Naive thymus-derived CD4-positive, alpha-beta T cell (primary cell): ENCODE measurements at regions of chr2 and their contacts with region 1.

Region 1: GRCh38 chr2:216412022-216412999 is at the start of gene SMARCAL1:
- DNase-seq: peak; percentile 93 to 98 (median 97)
- ATAC-seq: peak; percentile 97
- H3K4me3 ChIP-seq: peak within 1 kb of the TSS; percentile 89
- H3K4me3 Mint-ChIP-seq: peak within 1 kb of the TSS; percentile 85 to 99 (median 98)
- H3K27ac ChIP-seq: peak within 1 kb of the TSS; percentile 83
- H3K27ac Mint-ChIP-seq: peak within 1 kb of the TSS; percentile 86 to 97 (median 94)
- H3K4me1 ChIP-seq: peaks cover 0 to 7% of the 10 kb centered on the region in 2 donors
- H3K4me1 Mint-ChIP-seq: peaks cover 6 to 28% (median 23%) of the 10 kb centered on the region in 7 donors
- H3K27me3 ChIP-seq: no peaks in the 10 kb centered on the region
- H3K27me3 Mint-ChIP-seq: peaks cover 0 to 14% (median 3%) of the 10 kb centered on the region in 5 donors
- total RNA-seq, gene SMARCAL1: 16.2 to 30.3 (median 24.6) TPM

Region 2: DNA sequence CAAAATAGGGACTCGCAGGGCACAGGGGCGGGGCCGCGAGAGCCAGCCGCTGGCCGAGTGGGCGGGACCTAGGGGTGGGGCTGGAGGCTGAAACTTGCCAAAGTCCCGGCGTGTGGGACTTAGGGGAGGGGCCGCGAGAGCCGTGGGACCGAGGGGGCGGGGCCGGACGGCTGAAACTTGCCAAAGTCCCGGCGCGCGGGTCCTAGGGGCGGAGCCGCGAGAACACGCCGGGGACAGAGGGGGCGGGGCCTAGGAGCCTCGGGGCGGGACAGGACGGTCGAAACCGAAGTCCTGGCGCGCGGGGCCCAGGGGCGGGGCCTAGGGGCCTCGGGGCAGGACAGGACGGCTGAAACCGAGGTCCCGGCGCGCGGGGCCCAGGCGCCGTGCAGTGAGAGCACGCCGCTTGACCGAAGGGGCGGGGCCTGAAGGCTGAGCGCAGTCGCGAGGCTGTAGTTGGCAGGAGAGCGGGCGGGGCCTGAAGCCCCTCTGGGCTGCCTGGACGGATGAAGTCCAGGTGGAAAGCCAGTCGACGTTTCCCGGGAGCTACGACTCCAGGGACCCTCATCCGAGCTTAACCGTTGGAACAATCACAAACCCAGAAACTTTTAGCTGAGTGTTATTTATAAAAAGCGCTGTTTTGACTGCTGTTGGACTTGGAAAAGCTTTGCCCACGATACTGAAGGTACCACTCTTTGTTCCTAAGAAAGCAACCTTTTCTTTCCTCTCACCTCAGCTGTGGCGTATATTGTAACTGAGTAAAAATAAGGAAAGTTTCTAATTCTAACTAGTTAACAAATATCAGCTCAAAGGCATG is 1602.4 kb before region 1 on chr2:
- CTCF ChIA-PET with region 1: no interaction called
- POLR2A ChIA-PET with region 1: no interaction called
- intact Hi-C with region 1: loop called in 1 of 2 experiments (anchors 1 kb)
- DNase-seq: peak; percentile 75 to 100 (median 84)
- ATAC-seq: peak; percentile 89
- H3K4me3 ChIP-seq: peak overlapping the region; percentile 75
- H3K4me3 Mint-ChIP-seq: peak overlapping the region; percentile 88 to 98 (median 96)
- H3K27ac ChIP-seq: peak overlapping the region; percentile 72
- H3K27ac Mint-ChIP-seq: peak overlapping the region in 8 of 9 donors; percentile 56 to 95 (median 85)
- H3K4me1 ChIP-seq: peaks cover 0 to 7% of the 10 kb centered on the region in 2 donors
- H3K4me1 Mint-ChIP-seq: peaks cover 10 to 43% (median 35%) of the 10 kb centered on the region in 7 donors
- H3K27me3 ChIP-seq: no peaks in the 10 kb centered on the region
- H3K27me3 Mint-ChIP-seq: peaks cover 0 to 28% (median 9%) of the 10 kb centered on the region in 5 donors

Region 3: GRCh38 chr2:215931256-215931903 is 480.9 kb before region 1 on chr2:
- CTCF ChIA-PET with region 1: no interaction called
- POLR2A ChIA-PET with region 1: no interaction called
- intact Hi-C with region 1: no loop called
- DNase-seq: peak; percentile 9 to 53 (median 38)
- ATAC-seq: peak; percentile 66
- H3K4me3 ChIP-seq: no peak overlapping the region
- H3K4me3 Mint-ChIP-seq: no peak overlapping the region
- H3K27ac ChIP-seq: no peak overlapping the region
- H3K27ac Mint-ChIP-seq: no peak overlapping the region
- H3K4me1 ChIP-seq: no peaks in the 10 kb centered on the region
- H3K4me1 Mint-ChIP-seq: peaks cover 0 to 6% (median 0%) of the 10 kb centered on the region in 7 donors
- H3K27me3 ChIP-seq: no peaks in the 10 kb centered on the region
- H3K27me3 Mint-ChIP-seq: peaks cover 0 to 10% (median 0%) of the 10 kb centered on the region in 5 donors

Region 4: GRCh38 chr2:216034065-216034464 is 378.2 kb before region 1 on chr2:
- CTCF ChIA-PET with region 1: no interaction called
- POLR2A ChIA-PET with region 1: no interaction called
- intact Hi-C with region 1: loop called in 1 of 2 experiments (anchors 5 kb)
- DNase-seq: peak; percentile 50 to 83 (median 69)
- ATAC-seq: peak; percentile 89
- H3K4me3 ChIP-seq: no peak overlapping the region
- H3K4me3 Mint-ChIP-seq: no peak overlapping the region
- H3K27ac ChIP-seq: no peak overlapping the region
- H3K27ac Mint-ChIP-seq: peak overlapping the region in 1 of 9 donors; percentile 13
- H3K4me1 ChIP-seq: peaks cover 0 to 10% of the 10 kb centered on the region in 2 donors
- H3K4me1 Mint-ChIP-seq: peaks cover 15 to 31% (median 25%) of the 10 kb centered on the region in 7 donors
- H3K27me3 ChIP-seq: no peaks in the 10 kb centered on the region
- H3K27me3 Mint-ChIP-seq: no peaks in the 10 kb centered on the region

Region 5: DNA sequence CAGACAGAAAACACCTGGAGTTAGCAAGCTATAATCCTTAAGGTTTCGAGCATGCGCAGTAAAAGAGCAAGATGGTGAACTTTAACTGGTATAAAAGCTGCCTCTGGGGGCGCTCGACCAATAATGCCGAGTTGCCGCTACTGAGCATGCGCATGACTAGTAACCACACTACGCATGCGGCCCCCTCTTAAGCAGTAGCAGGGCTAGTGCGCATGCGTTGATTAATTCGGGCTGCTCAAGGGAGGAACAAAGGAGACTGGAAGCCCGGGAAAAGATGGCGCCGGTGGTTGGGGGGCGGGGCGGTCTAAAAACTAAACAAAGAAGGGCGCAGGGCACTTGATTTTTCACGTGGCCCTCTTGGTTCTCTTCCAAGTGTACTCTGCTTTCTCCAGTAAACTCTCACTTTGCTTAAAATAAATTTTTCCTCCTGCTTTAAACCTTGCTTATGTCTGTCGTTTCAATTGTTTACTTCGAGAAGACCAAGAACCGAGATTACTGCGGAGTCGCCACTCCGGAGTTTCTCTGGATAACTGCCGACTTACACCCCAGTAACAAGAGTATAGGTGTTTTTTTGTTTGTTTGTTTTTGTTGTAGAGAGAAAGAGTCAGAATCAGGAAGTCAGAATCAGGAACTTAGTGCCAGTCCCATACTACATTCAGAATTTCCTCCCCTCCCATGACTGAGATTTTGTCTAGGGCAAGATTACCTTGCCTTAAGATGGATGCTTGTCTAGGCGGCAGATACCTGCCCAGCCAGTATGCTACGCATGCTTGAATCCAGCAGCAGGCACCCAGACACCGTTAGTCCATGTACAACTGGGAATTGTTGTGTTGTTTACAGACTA is 297.4 kb before region 1 on chr2:
- CTCF ChIA-PET with region 1: no interaction called
- POLR2A ChIA-PET with region 1: no interaction called
- intact Hi-C with region 1: loop called (anchors 1 kb)
- DNase-seq: peak; percentile 91 to 98 (median 96)
- ATAC-seq: peak; percentile 94
- H3K4me3 ChIP-seq: peak overlapping the region; percentile 65
- H3K4me3 Mint-ChIP-seq: peak overlapping the region; percentile 88 to 99 (median 94)
- H3K27ac ChIP-seq: peak overlapping the region; percentile 77
- H3K27ac Mint-ChIP-seq: peak overlapping the region; percentile 89 to 99 (median 97)
- H3K4me1 ChIP-seq: peaks cover 35 to 58% of the 10 kb centered on the region in 2 donors
- H3K4me1 Mint-ChIP-seq: peaks cover 51 to 100% (median 96%) of the 10 kb centered on the region in 7 donors
- H3K27me3 ChIP-seq: no peaks in the 10 kb centered on the region
- H3K27me3 Mint-ChIP-seq: peaks cover 0 to 2% (median 0%) of the 10 kb centered on the region in 5 donors

Region 6: DNA sequence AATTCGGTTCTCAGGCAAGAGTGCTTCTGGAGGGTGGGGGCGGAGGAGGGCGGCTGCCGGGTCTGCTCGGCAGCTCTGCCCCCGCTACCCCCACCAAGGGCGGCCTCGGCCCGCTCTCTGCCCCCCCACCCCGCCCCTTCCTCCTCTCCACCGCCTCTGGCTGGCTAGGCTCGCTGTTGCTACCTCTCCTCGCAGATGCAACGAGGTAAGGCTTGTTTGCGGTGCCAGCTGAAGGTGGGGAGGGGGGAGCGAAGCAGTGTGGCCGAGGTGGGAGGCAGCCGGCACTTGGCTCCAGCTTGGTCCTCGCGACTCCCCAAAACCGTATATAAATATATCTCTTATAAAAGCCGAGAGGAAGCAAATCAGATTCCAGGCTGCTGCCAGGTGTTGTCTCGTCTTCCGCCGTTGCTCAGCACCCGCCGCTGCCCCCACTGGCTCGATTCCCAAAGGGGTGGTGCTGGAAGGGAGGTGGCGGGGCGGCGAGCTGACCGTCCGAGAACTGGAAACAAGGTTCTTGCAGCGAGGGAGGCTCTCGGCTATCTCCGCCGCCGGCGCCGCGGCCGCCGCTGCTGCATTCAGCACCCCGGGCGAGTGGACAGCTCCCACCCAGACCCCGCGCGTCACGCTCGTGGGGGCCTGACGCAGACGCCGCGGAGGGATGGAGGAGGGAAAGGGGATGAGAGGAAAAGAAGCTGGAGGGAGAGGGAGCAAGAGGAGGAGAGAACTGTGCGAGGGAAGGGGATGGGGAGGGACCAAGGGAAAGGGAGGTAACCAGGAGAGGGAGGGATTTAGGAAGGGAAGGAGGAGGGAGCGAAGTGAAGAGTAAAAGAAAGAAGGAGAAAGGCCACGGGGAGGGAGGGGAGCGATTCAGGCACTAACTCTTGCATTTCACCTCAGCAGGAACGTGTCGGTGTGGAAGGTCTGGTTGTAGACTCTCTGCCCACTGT is 40.3 kb before region 1 on chr2 and contains the start of gene MARCHF4:
- CTCF ChIA-PET with region 1: no interaction called
- POLR2A ChIA-PET with region 1: no interaction called
- intact Hi-C with region 1: loop called in 1 of 2 experiments (anchors 1 kb)
- DNase-seq: peak; percentile 50 to 81 (median 62)
- ATAC-seq: peak; percentile 92
- H3K4me3 ChIP-seq: no peak within 1 kb of the TSS
- H3K4me3 Mint-ChIP-seq: peak within 1 kb of the TSS; percentile 13 to 74 (median 58)
- H3K27ac ChIP-seq: no peak within 1 kb of the TSS
- H3K27ac Mint-ChIP-seq: peak within 1 kb of the TSS in 1 of 9 donors; percentile 32
- H3K4me1 ChIP-seq: peaks cover 0 to 7% of the 10 kb centered on the region in 2 donors
- H3K4me1 Mint-ChIP-seq: peaks cover 12 to 28% (median 17%) of the 10 kb centered on the region in 7 donors
- H3K27me3 ChIP-seq: peaks cover 4 to 8% of the 10 kb centered on the region in 2 donors
- H3K27me3 Mint-ChIP-seq: peaks cover 46 to 72% (median 54%) of the 10 kb centered on the region in 5 donors
- total RNA-seq, gene MARCHF4: not detected

Region 7: GRCh38 chr2:218286570-218287459 is 1874.5 kb after region 1 on chr2:
- CTCF ChIA-PET with region 1: no interaction called
- POLR2A ChIA-PET with region 1: no interaction called
- intact Hi-C with region 1: loop called in 1 of 2 experiments (anchors 1 kb)
- DNase-seq: peak; percentile 53 to 90 (median 78)
- ATAC-seq: peak; percentile 87
- H3K4me3 ChIP-seq: peak overlapping the region; percentile 66
- H3K4me3 Mint-ChIP-seq: peak overlapping the region; percentile 85 to 97 (median 94)
- H3K27ac ChIP-seq: peak overlapping the region; percentile 93
- H3K27ac Mint-ChIP-seq: peak overlapping the region; percentile 95 to 99 (median 99)
- H3K4me1 ChIP-seq: peaks cover 74 to 77% of the 10 kb centered on the region in 2 donors
- H3K4me1 Mint-ChIP-seq: peaks cover 53 to 87% (median 76%) of the 10 kb centered on the region in 7 donors
- H3K27me3 ChIP-seq: no peaks in the 10 kb centered on the region
- H3K27me3 Mint-ChIP-seq: no peaks in the 10 kb centered on the region